Ovary (tissue), 10 donors: ENCODE measurements at regions of chr17 and their contacts with region 1.

Region 1: GRCh38 chr17:29124117-29124924 is 55.9 kb downstream of the MYO18A start:
- DNase-seq: peak in 1 of 5 donors; percentile 54
- H3K4me3 ChIP-seq: no peak overlapping the region
- H3K27ac ChIP-seq: no peak overlapping the region
- H3K4me1 ChIP-seq: no peaks in the 10 kb centered on the region
- H3K27me3 ChIP-seq: no peaks in the 10 kb centered on the region
- CTCF ChIP-seq: peak in 1 of 3 donors; percentile 57
- EP300 ChIP-seq: no peak
- POLR2A ChIP-seq: no peak

Region 2: GRCh38 chr17:29283271-29283895 is 159.1 kb after region 1 on chr17:
- intact Hi-C with region 1: loop called in 1 of 4 experiments (anchors 10 kb)
- DNase-seq: no peak
- H3K4me3 ChIP-seq: no peak overlapping the region
- H3K27ac ChIP-seq: no peak overlapping the region
- H3K4me1 ChIP-seq: peaks cover 10% of the 10 kb centered on the region
- H3K27me3 ChIP-seq: no peaks in the 10 kb centered on the region
- CTCF ChIP-seq: no peak
- EP300 ChIP-seq: no peak
- POLR2A ChIP-seq: no peak